ENCODE measurements at regions of chr6 and their contacts with region 1.

Region 1: GRCh38 chr6:154510143-154510905 is at the start of gene CNKSR3:
- DNase-seq: peak; percentile 87 to 91 (median 89)
- ATAC-seq: peak; percentile 83 to 93 (median 90)
- H3K4me3 ChIP-seq: peak within 1 kb of the TSS; percentile 56 to 91 (median 82)
- H3K27ac ChIP-seq: peak within 1 kb of the TSS; percentile 70 to 98 (median 91)
- H3K4me1 ChIP-seq: peaks cover 0 to 36% (median 16%) of the 10 kb centered on the region in 12 donors
- H3K27me3 ChIP-seq: peaks cover 0 to 22% (median 0%) of the 10 kb centered on the region in 9 donors
- CTCF ChIP-seq: peak in 4 of 12 donors; percentile 3 to 25 (median 12)
- POLR2A ChIP-seq: peak in 1 of 2 donors; percentile 85
- total RNA-seq, gene CNKSR3: 9.6 to 30.7 (median 22.9) TPM

Region 2: GRCh38 chr6:154432533-154433476 is 77.5 kb before region 1 on chr6:
- intact Hi-C with region 1: loop called in 2 of 10 experiments (anchors 5 kb)
- DNase-seq: peak in 1 of 5 donors; percentile 24
- ATAC-seq: peak in 3 of 4 donors; percentile 68 to 80 (median 72)
- H3K4me3 ChIP-seq: no peak overlapping the region
- H3K27ac ChIP-seq: peak overlapping the region in 7 of 12 donors; percentile 10 to 61 (median 35)
- H3K4me1 ChIP-seq: peaks cover 0 to 43% (median 21%) of the 10 kb centered on the region in 12 donors
- H3K27me3 ChIP-seq: no peaks in the 10 kb centered on the region
- CTCF ChIP-seq: no peak
- POLR2A ChIP-seq: no peak

Region 3: GRCh38 chr6:154448448-154449096 is 61.8 kb before region 1 on chr6:
- intact Hi-C with region 1: loop called in 3 of 10 experiments (anchors 5 to 10 kb)
- DNase-seq: peak in 2 of 5 donors; percentile 46 to 51
- ATAC-seq: peak; percentile 64 to 94 (median 88)
- H3K4me3 ChIP-seq: peak overlapping the region in 7 of 12 donors; percentile 4 to 31 (median 14)
- H3K27ac ChIP-seq: peak overlapping the region in 11 of 12 donors; percentile 30 to 74 (median 57)
- H3K4me1 ChIP-seq: peaks cover 5 to 45% (median 22%) of the 10 kb centered on the region in 12 donors
- H3K27me3 ChIP-seq: no peaks in the 10 kb centered on the region
- CTCF ChIP-seq: peak in 5 of 12 donors; percentile 8 to 45 (median 27)
- POLR2A ChIP-seq: no peak

Region 4: DNA sequence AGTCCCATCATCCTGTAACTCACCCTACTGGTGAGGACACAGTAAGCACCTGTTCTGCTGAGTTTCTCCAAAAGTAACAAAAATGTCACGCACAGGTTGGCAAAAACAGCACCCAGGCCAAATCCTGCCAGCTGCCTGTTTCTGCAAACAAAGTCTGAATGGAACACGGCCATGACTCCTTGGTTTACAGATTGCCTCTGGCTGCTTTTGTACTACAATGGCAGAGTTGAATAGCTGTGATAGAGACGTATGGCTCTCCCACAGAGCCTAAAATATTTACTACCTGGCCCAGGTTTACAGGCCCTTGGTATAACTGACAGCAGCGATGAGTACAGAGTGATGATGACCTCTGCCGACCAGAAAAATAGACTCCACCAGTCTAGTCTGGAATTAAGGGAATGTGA is 52.4 kb before region 1 on chr6:
- intact Hi-C with region 1: loop called in 3 of 10 experiments (anchors 5 to 10 kb)
- DNase-seq: no peak
- ATAC-seq: peak in 2 of 4 donors; percentile 36 to 57
- H3K4me3 ChIP-seq: no peak overlapping the region
- H3K27ac ChIP-seq: peak overlapping the region in 1 of 12 donors; percentile 78
- H3K4me1 ChIP-seq: peaks cover 0 to 48% (median 16%) of the 10 kb centered on the region in 12 donors
- H3K27me3 ChIP-seq: no peaks in the 10 kb centered on the region
- CTCF ChIP-seq: no peak
- POLR2A ChIP-seq: no peak

Region 5: GRCh38 chr6:154593122-154593521 is 82.8 kb after region 1 on chr6:
- intact Hi-C with region 1: loop called in 3 of 10 experiments (anchors 1 to 10 kb)
- DNase-seq: peak in 4 of 5 donors; percentile 66 to 79 (median 68)
- ATAC-seq: peak; percentile 84 to 94 (median 94)
- H3K4me3 ChIP-seq: peak overlapping the region in 1 of 12 donors; percentile 25
- H3K27ac ChIP-seq: peak overlapping the region; percentile 48 to 90 (median 87)
- H3K4me1 ChIP-seq: peaks cover 0 to 40% (median 8%) of the 10 kb centered on the region in 12 donors
- H3K27me3 ChIP-seq: no peaks in the 10 kb centered on the region
- CTCF ChIP-seq: no peak
- POLR2A ChIP-seq: no peak

Region 6: GRCh38 chr6:154653853-154654252 is 143.5 kb after region 1 on chr6:
- intact Hi-C with region 1: loop called in 1 of 10 experiments (anchors 10 kb)
- DNase-seq: peak in 2 of 5 donors; percentile 23 to 35
- ATAC-seq: peak; percentile 55 to 90 (median 74)
- H3K4me3 ChIP-seq: no peak overlapping the region
- H3K27ac ChIP-seq: peak overlapping the region in 4 of 12 donors; percentile 12 to 69 (median 14)
- H3K4me1 ChIP-seq: peaks cover 0 to 27% (median 8%) of the 10 kb centered on the region in 12 donors
- H3K27me3 ChIP-seq: no peaks in the 10 kb centered on the region
- CTCF ChIP-seq: no peak
- POLR2A ChIP-seq: no peak

Region 7: GRCh38 chr6:154733012-154733625 is 222.8 kb after region 1 on chr6 and contains the start of gene SCAF8:
- intact Hi-C with region 1: loop called in 2 of 10 experiments (anchors 2 to 10 kb)
- DNase-seq: peak; percentile 81 to 91 (median 88)
- ATAC-seq: peak; percentile 66 to 91 (median 82)
- H3K4me3 ChIP-seq: peak within 1 kb of the TSS; percentile 75 to 100 (median 98)
- H3K27ac ChIP-seq: peak within 1 kb of the TSS; percentile 97 to 100 (median 100)
- H3K4me1 ChIP-seq: peaks cover 17 to 50% (median 44%) of the 10 kb centered on the region in 12 donors
- H3K27me3 ChIP-seq: no peaks in the 10 kb centered on the region
- CTCF ChIP-seq: peak; percentile 61 to 98 (median 86)
- POLR2A ChIP-seq: peak in 1 of 2 donors; percentile 24
- total RNA-seq, gene SCAF8: 42.9 to 83.5 (median 64.6) TPM